Breast epithelium (tissue), 4 donors: ENCODE measurements at regions of chr12 and their contacts with region 1.

Region 1: GRCh38 chr12:120199595-120200306 is 1.2 kb downstream of the RPLP0 start:
- DNase-seq: no peak
- H3K4me3 ChIP-seq: peak overlapping the region; percentile 82 to 92 (median 84)
- H3K27ac ChIP-seq: peak overlapping the region; percentile 90 to 91
- H3K4me1 ChIP-seq: peaks cover 7 to 17% of the 10 kb centered on the region in 2 donors
- H3K27me3 ChIP-seq: no peaks in the 10 kb centered on the region
- CTCF ChIP-seq: no peak
- POLR2A ChIP-seq: no peak

Region 2: DNA sequence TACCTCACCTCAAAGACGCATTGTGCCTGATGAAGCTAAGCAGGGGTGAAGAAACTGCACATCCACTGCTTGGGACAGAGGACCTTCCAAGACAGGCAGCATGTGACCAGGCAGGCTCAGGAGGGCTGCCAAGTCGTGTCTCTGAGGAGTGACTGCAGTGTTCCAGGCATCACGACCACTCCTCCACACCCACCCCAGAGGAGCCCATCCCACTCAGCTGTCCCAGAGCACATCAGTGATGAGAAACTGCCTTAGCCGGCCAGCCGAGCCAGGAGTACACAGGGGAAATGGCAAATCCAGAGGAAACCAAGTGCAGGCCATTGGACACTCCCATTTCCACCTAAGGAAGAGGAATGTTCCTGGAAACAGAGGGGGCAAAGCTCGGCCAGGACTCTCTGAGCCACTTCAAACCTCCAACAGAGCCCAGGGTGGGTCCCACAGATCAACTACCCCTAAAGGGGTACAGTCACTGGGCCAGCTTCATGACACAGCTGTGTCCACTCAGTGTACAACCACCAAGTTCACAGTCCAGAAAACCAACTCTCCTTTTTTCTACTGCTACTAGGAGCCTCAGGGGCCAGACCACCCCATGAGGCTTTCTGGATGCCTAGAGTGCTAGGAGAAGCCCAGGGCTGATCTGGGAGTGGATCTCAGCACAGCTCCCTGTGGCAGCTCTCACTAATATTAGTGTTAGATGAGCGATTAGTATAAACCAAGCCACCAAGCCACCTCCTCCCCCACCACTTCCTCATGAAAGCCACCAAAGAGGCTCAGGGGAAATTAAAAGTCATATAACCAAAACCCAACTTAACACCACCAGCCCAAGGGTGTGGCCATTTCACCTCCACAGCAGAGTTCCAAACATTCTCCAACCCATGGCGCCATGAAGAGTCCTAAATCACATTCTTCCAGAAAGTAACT is 50.4 kb after region 1 on chr12:
- intact Hi-C with region 1: loop called (anchors 1 kb)
- DNase-seq: no peak
- H3K4me3 ChIP-seq: peak overlapping the region; percentile 9 to 48 (median 33)
- H3K27ac ChIP-seq: peak overlapping the region; percentile 78 to 90
- H3K4me1 ChIP-seq: peaks cover 2 to 12% of the 10 kb centered on the region in 2 donors
- H3K27me3 ChIP-seq: no peaks in the 10 kb centered on the region
- CTCF ChIP-seq: no peak
- POLR2A ChIP-seq: no peak